ENCODE measurements at regions of chr10 and their contacts with region 1.

Region 1: DNA sequence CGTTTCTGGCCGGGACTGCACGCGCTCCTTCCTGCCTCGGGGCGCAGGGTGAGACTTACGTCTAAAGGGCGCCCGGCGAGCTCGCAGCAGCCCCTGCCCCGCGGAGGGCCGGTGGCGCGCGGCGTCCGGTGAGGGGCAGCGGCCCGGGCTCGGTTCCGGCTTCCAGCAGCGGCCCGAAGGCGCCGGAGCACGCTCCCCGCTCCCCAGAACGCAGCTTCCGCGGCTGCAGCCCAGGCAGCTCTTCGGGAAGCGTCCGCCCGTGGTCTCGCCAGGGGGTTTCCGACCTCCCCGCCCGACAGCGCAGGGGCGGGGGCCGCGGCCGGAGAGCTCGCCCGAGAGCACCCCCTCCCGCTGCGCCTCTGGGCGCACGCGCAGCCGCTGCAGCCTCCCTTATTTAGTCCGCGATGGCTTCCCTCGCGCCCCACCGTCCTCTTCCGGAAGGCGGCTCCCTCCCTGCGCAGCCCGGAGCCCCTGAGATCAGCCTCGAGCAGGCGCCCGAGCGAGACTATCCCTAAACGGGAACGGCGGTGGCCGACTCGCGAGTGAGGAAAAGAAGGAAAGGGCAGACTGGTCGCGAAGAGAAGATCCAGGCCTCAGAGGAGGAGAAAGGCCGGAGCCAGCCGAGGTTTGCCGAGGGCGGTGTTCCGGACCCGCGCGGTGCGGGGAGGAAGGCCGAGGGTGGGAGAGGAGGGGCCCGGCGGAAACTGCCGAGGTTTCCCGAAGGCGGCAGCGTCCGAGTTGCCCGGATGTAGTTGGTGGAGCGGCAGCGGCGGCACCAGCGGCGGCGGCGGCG is at the start of gene WAC:
- DNase-seq: peak; percentile 97 to 98
- ATAC-seq: peak; percentile 77 to 92 (median 81)
- H3K4me3 ChIP-seq: peak within 1 kb of the TSS; percentile 83
- H3K4me3 Mint-ChIP-seq: peak within 1 kb of the TSS; percentile 100
- H3K27ac ChIP-seq: peak within 1 kb of the TSS; percentile 97
- H3K27ac Mint-ChIP-seq: peak within 1 kb of the TSS; percentile 100
- H3K4me1 ChIP-seq: peaks cover 18% of the 10 kb centered on the region
- H3K4me1 Mint-ChIP-seq: peaks cover 59 to 81% of the 10 kb centered on the region in 2 donors
- H3K27me3 ChIP-seq: no peaks in the 10 kb centered on the region
- H3K27me3 Mint-ChIP-seq: no peaks in the 10 kb centered on the region
- CTCF ChIP-seq: no peak
- total RNA-seq, gene WAC: 225 to 245 (median 226) TPM

Region 2: GRCh38 chr10:27241652-27242472 is 1290.7 kb before region 1 on chr10:
- intact Hi-C with region 1: loop called (anchors 5 kb)
- DNase-seq: peak; percentile 86 to 95
- ATAC-seq: peak; percentile 76 to 88 (median 82)
- H3K4me3 ChIP-seq: peak overlapping the region; percentile 81
- H3K4me3 Mint-ChIP-seq: peak overlapping the region; percentile 95
- H3K27ac ChIP-seq: peak overlapping the region; percentile 87
- H3K27ac Mint-ChIP-seq: peak overlapping the region; percentile 98
- H3K4me1 ChIP-seq: peaks cover 35% of the 10 kb centered on the region
- H3K4me1 Mint-ChIP-seq: peaks cover 41 to 44% of the 10 kb centered on the region in 2 donors
- H3K27me3 ChIP-seq: no peaks in the 10 kb centered on the region
- H3K27me3 Mint-ChIP-seq: no peaks in the 10 kb centered on the region
- CTCF ChIP-seq: peak; percentile 14

Region 3: DNA sequence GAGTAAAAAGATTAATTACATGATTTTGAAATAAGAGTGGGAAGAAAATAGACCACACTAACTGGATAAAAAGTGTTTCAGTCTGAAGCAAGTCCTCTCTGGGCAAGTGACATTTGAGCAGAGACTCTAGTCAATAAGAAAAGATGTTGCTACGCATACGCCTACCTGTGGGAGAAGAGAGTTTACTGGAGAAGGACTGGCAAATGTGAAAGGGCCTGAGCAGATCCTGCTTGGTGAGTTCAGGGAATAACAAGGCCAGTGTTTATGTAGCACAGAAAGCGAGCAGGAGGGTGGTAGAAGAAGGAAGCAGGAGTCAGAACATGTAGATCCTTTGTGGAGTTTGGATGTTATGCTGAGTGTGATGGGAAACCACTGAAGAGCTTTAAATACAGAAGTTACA is 985.1 kb before region 1 on chr10:
- intact Hi-C with region 1: no loop called
- DNase-seq: no peak
- ATAC-seq: no peak
- H3K4me3 ChIP-seq: no peak overlapping the region
- H3K4me3 Mint-ChIP-seq: no peak overlapping the region
- H3K27ac ChIP-seq: no peak overlapping the region
- H3K27ac Mint-ChIP-seq: peak overlapping the region; percentile 23 to 37
- H3K4me1 ChIP-seq: peaks cover 10% of the 10 kb centered on the region
- H3K4me1 Mint-ChIP-seq: peaks cover 10 to 14% of the 10 kb centered on the region in 2 donors
- H3K27me3 ChIP-seq: no peaks in the 10 kb centered on the region
- H3K27me3 Mint-ChIP-seq: no peaks in the 10 kb centered on the region
- CTCF ChIP-seq: no peak

Region 4: DNA sequence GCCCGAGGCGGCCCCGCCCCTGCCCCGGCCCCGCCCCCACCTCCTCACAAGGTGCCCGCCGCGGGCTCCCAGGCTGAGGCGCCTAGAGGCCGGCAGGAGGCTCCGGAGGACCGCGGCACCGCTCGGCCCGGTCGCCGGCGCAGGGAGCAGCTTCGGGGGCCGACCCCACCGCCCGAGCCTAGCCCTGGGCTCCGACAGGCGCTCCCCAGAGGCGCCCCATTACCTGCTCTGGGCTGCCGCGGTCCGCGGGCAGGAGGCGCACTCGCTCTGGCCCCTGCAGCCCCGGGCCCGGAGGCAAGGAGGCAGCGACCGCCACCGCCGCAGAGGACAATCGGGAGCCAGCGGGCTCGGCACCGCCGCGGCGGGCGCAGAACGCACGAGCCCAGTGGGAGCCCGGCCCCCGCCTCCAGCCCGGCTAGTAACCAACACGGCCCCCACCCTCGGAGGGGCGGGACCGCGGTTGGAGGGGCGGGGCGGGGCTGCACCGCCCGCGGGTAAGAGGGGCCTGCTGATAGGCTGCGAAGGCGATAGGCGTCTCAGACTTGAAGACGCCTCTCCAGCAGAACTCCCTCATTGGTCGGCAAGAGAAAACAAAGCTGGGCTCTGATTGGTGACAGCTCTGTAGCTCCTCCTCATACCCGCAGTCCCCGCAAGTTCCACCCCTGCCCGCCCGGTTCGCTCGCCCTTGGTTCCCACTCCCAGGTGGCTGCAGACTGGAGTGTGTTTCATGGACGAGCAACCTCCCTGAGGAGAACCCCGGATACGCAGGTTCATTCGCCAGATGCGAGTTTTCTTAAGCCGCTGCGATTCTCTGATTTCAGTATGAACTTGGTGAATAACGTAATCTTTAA is 229.7 kb before region 1 on chr10 and contains the start of gene MPP7:
- intact Hi-C with region 1: loop called (anchors 1 kb)
- DNase-seq: peak; percentile 97 to 99
- ATAC-seq: peak; percentile 88 to 98 (median 88)
- H3K4me3 ChIP-seq: peak within 1 kb of the TSS; percentile 59
- H3K4me3 Mint-ChIP-seq: peak within 1 kb of the TSS; percentile 96
- H3K27ac ChIP-seq: peak within 1 kb of the TSS; percentile 72
- H3K27ac Mint-ChIP-seq: peak within 1 kb of the TSS; percentile 91
- H3K4me1 ChIP-seq: peaks cover 4% of the 10 kb centered on the region
- H3K4me1 Mint-ChIP-seq: peaks cover 26 to 31% of the 10 kb centered on the region in 2 donors
- H3K27me3 ChIP-seq: no peaks in the 10 kb centered on the region
- H3K27me3 Mint-ChIP-seq: peaks cover 9% of the 10 kb centered on the region in 2 donors
- CTCF ChIP-seq: peak; percentile 57
- total RNA-seq, gene MPP7: 11.5 to 21.0 (median 19.1) TPM